A673 (cell line): ENCODE measurements at regions of chr5 and their contacts with region 1.

Region 1: DNA sequence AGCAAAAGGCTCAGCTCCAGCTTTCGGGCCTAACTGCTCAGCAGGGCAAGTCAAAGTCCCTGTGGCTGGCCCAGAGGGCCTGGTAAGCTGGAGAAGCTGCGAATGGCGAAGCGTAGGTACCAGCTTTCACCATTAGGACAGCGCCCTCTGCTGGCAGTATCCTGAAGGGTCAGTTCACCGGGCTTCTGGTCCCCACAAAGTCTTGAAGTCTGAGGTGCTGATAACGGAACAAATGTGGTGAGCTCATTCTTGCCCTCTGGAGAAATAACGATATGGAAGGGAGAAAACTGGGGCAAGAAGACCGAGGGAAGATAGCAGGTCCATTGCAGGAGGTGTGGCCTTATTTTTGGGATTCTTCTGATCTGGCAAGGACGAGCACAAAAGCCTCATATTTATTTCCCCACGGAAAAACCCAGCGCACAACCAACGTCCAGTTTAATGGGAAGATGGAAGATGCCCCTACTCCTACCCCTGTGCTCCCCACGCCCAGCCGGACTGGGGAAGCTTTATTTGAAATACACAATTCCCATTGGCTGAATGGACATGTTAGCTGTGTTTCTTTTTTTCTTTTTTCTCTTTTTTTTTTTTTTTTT is 7.2 kb downstream of the SOWAHA start:
- DNase-seq: peak; percentile 91
- H3K4me3 ChIP-seq: no peak overlapping the region
- H3K27ac ChIP-seq: no peak overlapping the region
- H3K4me1 ChIP-seq: peaks cover 4% of the 10 kb centered on the region
- H3K27me3 ChIP-seq: no peaks in the 10 kb centered on the region
- CTCF ChIP-seq: peak; percentile 93

Region 2: GRCh38 chr5:132386644-132387286 is 433.5 kb before region 1 on chr5:
- CTCF ChIA-PET with region 1: no interaction called
- POLR2A ChIA-PET with region 1: no interaction called
- intact Hi-C with region 1: loop called (anchors 1 kb)
- DNase-seq: peak; percentile 72
- H3K4me3 ChIP-seq: no peak overlapping the region
- H3K27ac ChIP-seq: no peak overlapping the region
- H3K4me1 ChIP-seq: no peaks in the 10 kb centered on the region
- H3K27me3 ChIP-seq: no peaks in the 10 kb centered on the region
- CTCF ChIP-seq: peak; percentile 83

Region 3: DNA sequence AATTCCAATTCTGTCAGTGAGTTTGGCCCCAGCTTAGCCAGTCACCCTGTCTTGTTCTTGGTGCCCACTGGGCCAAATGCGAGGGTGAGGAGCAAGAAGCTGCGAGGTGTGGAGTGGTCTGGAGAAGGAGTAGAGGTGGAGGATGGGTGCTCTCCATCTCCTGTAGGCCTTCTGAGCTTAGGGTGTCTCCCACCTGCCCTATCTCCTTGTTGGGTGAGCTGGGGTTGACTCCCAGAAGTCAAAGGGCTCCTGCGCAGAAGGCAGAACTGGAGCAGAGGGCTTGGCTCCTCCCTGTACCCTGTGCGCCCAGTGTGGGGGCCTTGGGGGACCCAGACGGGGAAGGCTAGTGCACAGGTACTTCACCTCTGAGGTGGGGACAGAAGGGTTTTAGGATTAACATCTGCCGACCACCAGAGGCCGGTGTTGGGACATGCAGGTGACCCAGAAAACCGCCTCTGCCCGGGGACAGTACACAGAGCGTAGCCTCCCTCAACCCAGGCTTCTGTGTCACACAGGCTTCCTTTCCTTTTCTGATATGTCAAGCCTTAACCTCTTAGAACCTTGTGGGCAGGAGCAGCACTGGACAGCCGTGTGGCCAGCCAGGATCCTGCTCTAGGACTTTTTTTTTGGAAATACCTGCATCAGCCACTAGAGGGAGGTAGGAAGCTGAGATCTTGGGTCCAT is 293.8 kb before region 1 on chr5:
- CTCF ChIA-PET with region 1: interaction called, 12 read pairs
- POLR2A ChIA-PET with region 1: no interaction called
- intact Hi-C with region 1: loop called (anchors 1 kb)
- DNase-seq: peak; percentile 53
- H3K4me3 ChIP-seq: no peak overlapping the region
- H3K27ac ChIP-seq: no peak overlapping the region
- H3K4me1 ChIP-seq: no peaks in the 10 kb centered on the region
- H3K27me3 ChIP-seq: no peaks in the 10 kb centered on the region
- CTCF ChIP-seq: peak; percentile 90

Region 4: DNA sequence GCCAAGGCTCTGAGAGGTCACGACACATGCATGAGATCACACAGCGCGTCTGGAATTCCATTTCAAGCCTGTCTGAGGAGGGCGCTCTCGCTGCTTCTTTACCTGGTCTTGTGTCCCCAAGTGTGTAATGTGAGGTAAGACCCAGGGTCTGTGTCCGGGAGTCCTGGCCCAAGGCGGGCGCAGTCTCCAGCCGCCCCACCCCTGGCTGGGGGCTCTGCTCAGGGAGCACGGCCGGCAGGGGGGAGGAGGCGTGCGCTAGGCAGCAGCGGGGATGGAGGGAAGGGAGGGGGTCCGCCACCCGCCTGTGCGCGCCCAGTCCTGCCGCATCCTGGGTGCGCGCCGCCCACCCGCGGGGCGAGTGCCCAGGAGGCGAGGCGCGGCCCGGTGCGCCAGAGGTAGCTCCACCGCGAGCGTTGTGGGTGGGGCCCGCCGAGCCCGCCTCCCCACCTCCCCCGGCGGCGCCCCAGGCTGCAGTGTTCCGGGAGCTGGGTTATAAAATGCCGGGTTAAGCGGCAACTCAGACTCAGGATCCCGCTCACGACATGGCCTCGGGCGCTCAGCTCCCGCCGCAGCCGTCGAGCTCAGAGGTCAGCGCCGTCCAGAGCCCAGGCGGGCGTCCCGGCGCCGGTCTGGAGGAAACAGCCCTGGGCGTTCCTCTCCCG is 73.2 kb before region 1 on chr5 and contains the start of gene CCNI2:
- CTCF ChIA-PET with region 1: no interaction called
- POLR2A ChIA-PET with region 1: no interaction called
- intact Hi-C with region 1: loop called (anchors 2 kb)
- DNase-seq: peak; percentile 32
- H3K4me3 ChIP-seq: peak within 1 kb of the TSS; percentile 59
- H3K27ac ChIP-seq: no peak within 1 kb of the TSS
- H3K4me1 ChIP-seq: no peaks in the 10 kb centered on the region
- H3K27me3 ChIP-seq: peaks cover 8% of the 10 kb centered on the region
- CTCF ChIP-seq: peak; percentile 65
- total RNA-seq, gene CCNI2: 0.11 TPM in 1 of 2 replicates, not detected in the other

Region 5: GRCh38 chr5:132754947-132755346 is 65.3 kb before region 1 on chr5:
- CTCF ChIA-PET with region 1: interaction called, 11 read pairs
- POLR2A ChIA-PET with region 1: no interaction called
- intact Hi-C with region 1: loop called (anchors 1 kb)
- DNase-seq: peak; percentile 42
- H3K4me3 ChIP-seq: no peak overlapping the region
- H3K27ac ChIP-seq: no peak overlapping the region
- H3K4me1 ChIP-seq: no peaks in the 10 kb centered on the region
- H3K27me3 ChIP-seq: no peaks in the 10 kb centered on the region
- CTCF ChIP-seq: peak; percentile 36

Region 6: DNA sequence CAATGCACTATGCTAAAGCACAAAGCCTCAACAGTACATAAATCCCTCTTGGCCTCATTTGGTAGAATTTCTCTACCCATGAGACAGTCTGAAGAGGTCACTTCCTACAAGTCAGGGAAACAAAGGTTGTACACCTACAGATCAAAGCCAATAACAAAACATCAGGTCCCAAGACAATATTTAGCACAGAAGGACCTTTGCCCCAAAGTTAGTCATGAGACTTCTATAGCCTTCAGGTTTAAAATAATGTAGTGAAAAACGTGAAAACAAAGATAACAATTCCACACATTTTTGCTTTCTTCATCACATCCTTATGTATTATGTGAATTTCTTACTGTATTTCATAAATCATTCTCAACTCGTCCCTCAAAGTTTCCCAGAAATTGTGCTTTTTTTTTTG is 127.4 kb after region 1 on chr5:
- CTCF ChIA-PET with region 1: no interaction called
- POLR2A ChIA-PET with region 1: no interaction called
- intact Hi-C with region 1: no loop called
- DNase-seq: no peak
- H3K4me3 ChIP-seq: no peak overlapping the region
- H3K27ac ChIP-seq: no peak overlapping the region
- H3K4me1 ChIP-seq: no peaks in the 10 kb centered on the region
- H3K27me3 ChIP-seq: no peaks in the 10 kb centered on the region
- CTCF ChIP-seq: no peak